CD8-positive, alpha-beta memory T cell (primary cell): ENCODE measurements at regions of chr6 and their contacts with region 1.

Region 1: DNA sequence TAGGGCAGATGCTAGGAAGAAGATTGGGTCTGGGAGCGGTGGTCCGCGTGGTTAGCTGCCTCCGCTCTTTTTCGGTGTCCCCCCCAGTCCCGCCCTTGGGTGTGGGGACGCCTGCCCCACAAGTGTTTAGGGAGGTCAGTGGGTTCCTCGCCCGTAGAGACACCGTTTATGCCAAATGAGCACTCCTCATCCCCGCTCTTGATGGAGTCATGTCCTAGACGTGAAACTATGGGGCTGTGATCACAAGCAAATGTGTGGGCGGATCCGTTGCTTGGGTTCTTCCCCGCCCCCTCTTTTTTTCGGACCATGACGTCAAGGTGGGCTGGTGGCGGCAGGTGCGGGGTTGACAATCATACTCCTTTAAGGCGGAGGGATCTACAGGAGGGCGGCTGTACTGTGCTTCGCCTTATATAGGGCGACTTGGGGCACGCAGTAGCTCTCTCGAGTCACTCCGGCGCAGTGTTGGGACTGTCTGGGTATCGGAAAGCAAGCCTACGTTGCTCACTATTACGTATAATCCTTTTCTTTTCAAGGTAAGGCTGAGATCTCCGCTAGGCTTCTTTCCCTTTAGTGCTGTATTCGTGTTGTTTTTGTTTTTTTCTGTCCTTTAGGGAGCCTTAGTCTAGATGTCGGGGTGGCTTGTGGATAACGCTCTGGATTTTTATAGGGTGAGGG is at the start of gene HSP90AB1:
- DNase-seq: peak; percentile 87 to 98 (median 95)
- H3K4me3 ChIP-seq: peak within 1 kb of the TSS; percentile 98
- H3K4me3 Mint-ChIP-seq: peak within 1 kb of the TSS; percentile 91 to 99 (median 98)
- H3K27ac ChIP-seq: peak within 1 kb of the TSS; percentile 98
- H3K27ac Mint-ChIP-seq: peak within 1 kb of the TSS; percentile 91 to 99 (median 98)
- H3K4me1 ChIP-seq: peaks cover 23% of the 10 kb centered on the region
- H3K4me1 Mint-ChIP-seq: peaks cover 37 to 51% (median 47%) of the 10 kb centered on the region in 3 donors
- H3K27me3 ChIP-seq: no peaks in the 10 kb centered on the region
- H3K27me3 Mint-ChIP-seq: peaks cover 0 to 7% of the 10 kb centered on the region in 2 donors
- total RNA-seq, gene HSP90AB1: 2,387 to 2,400 TPM

Region 2: DNA sequence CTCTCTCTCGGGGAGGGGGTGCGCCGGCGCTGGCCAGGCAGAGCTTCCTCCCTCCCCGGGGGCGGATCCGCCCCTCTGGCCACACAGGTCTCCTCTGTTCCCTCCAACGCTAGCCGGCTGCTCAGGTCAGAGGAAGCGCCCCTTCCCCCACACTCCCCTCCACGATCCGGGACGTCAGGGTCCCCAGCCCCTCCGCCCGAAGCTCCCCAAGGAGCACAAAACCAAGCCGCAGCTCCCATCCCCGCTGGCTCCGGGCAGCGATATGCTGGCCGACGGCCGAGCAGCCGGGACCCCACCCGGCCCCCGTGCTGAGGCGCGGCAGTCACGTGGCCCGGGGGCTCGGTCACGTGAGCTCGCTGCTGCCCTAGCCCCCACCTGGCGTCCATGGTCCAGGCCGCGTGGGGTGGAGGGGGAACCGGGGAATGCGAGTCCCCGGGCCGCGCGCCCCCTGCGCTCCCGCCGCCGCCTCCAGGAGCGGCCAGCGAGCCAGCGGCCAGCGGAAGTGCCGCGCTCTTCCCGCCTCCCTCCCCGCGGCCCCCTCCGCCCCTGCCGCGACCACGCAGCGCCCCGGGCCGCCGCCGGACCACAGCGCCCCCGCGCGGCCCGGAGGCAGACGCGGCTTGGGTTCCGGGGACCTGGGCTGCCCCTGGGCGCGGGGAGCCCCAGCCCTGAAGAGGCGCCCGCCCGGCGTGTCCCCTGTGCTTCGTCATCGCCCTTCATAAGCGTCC is 10.4 kb after region 1 on chr6 and contains the start of gene SLC35B2:
- CTCF ChIA-PET with region 1: interaction called, 74 read pairs
- POLR2A ChIA-PET with region 1: interaction called, 77 read pairs
- DNase-seq: peak; percentile 58 to 77 (median 72)
- H3K4me3 ChIP-seq: peak within 1 kb of the TSS; percentile 84
- H3K4me3 Mint-ChIP-seq: peak within 1 kb of the TSS; percentile 88 to 92 (median 91)
- H3K27ac ChIP-seq: peak within 1 kb of the TSS; percentile 81
- H3K27ac Mint-ChIP-seq: peak within 1 kb of the TSS; percentile 92 to 99 (median 95)
- H3K4me1 ChIP-seq: peaks cover 25% of the 10 kb centered on the region
- H3K4me1 Mint-ChIP-seq: peaks cover 51 to 71% (median 61%) of the 10 kb centered on the region in 3 donors
- H3K27me3 ChIP-seq: no peaks in the 10 kb centered on the region
- H3K27me3 Mint-ChIP-seq: peaks cover 0 to 3% of the 10 kb centered on the region in 2 donors
- total RNA-seq, gene SLC35B2: 34.8 to 35.7 TPM

Region 3: GRCh38 chr6:44512868-44513741 is 266.3 kb after region 1 on chr6:
- CTCF ChIA-PET with region 1: no interaction called
- POLR2A ChIA-PET with region 1: no interaction called
- DNase-seq: no peak
- H3K4me3 ChIP-seq: no peak overlapping the region
- H3K4me3 Mint-ChIP-seq: no peak overlapping the region
- H3K27ac ChIP-seq: no peak overlapping the region
- H3K27ac Mint-ChIP-seq: no peak overlapping the region
- H3K4me1 ChIP-seq: no peaks in the 10 kb centered on the region
- H3K4me1 Mint-ChIP-seq: no peaks in the 10 kb centered on the region
- H3K27me3 ChIP-seq: peaks cover 4% of the 10 kb centered on the region
- H3K27me3 Mint-ChIP-seq: peaks cover 10 to 12% of the 10 kb centered on the region in 2 donors